ENCODE measurements at regions of chr1 and their contacts with region 1.

Region 1: GRCh38 chr1:218345673-218346390 is 696 bp downstream of the TGFB2 start:
- ATAC-seq: peak; percentile 59 to 85 (median 81)
- H3K4me3 ChIP-seq: peak overlapping the region; percentile 49 to 62 (median 50)
- H3K27ac ChIP-seq: peak overlapping the region; percentile 35 to 51
- H3K4me1 ChIP-seq: peaks cover 5 to 14% of the 10 kb centered on the region in 2 donors

Region 2: GRCh38 chr1:218510153-218510772 is 164.4 kb after region 1 on chr1:
- in situ Hi-C with region 1: loop called in 2 of 9 experiments (anchors 10 to 25 kb)
- ATAC-seq: no peak
- H3K4me3 ChIP-seq: no peak overlapping the region
- H3K27ac ChIP-seq: no peak overlapping the region
- H3K4me1 ChIP-seq: no peaks in the 10 kb centered on the region

Region 3: DNA sequence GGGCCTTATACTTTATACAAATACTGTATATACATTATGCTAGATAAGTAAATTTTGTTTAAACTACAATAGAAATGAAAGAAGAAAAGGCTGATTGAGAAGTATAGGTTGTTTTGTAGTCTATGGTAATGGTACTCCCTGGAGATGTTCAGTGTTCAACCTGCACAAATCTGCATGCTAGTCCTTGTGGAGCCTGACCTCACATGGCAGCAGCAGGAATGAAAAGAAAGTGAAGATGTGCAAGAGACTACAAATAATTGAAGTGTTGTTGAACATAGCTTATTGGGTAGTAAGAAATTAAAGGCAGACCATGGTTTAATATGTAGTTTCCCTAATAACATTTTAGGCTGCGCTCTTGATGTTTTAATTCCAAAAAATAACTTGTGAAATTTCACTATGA is 200.5 kb after region 1 on chr1:
- in situ Hi-C with region 1: loop called in 1 of 9 experiments (anchors 25 kb)
- ATAC-seq: peak in 2 of 8 experiments; percentile 16 to 42
- H3K4me3 ChIP-seq: no peak overlapping the region
- H3K27ac ChIP-seq: no peak overlapping the region
- H3K4me1 ChIP-seq: no peaks in the 10 kb centered on the region

Region 4: GRCh38 chr1:219416594-219417238 is 1070.9 kb after region 1 on chr1:
- in situ Hi-C with region 1: loop called in 1 of 9 experiments (anchors 25 kb)
- ATAC-seq: peak in 5 of 8 experiments; percentile 52 to 70 (median 67)
- H3K4me3 ChIP-seq: no peak overlapping the region
- H3K27ac ChIP-seq: no peak overlapping the region
- H3K4me1 ChIP-seq: no peaks in the 10 kb centered on the region

Region 5: GRCh38 chr1:219660666-219661463 is 1315.0 kb after region 1 on chr1:
- in situ Hi-C with region 1: loop called in 6 of 9 experiments (anchors 25 kb)
- ATAC-seq: peak; percentile 66 to 99 (median 98)
- H3K4me3 ChIP-seq: peak overlapping the region in 1 of 5 donors; percentile 5
- H3K27ac ChIP-seq: no peak overlapping the region
- H3K4me1 ChIP-seq: peaks cover 9 to 10% of the 10 kb centered on the region in 2 donors

Measured in motor neuron (in vitro differentiated cells).